ENCODE measurements at regions of chr20 and their contacts with region 1.

Region 1: DNA sequence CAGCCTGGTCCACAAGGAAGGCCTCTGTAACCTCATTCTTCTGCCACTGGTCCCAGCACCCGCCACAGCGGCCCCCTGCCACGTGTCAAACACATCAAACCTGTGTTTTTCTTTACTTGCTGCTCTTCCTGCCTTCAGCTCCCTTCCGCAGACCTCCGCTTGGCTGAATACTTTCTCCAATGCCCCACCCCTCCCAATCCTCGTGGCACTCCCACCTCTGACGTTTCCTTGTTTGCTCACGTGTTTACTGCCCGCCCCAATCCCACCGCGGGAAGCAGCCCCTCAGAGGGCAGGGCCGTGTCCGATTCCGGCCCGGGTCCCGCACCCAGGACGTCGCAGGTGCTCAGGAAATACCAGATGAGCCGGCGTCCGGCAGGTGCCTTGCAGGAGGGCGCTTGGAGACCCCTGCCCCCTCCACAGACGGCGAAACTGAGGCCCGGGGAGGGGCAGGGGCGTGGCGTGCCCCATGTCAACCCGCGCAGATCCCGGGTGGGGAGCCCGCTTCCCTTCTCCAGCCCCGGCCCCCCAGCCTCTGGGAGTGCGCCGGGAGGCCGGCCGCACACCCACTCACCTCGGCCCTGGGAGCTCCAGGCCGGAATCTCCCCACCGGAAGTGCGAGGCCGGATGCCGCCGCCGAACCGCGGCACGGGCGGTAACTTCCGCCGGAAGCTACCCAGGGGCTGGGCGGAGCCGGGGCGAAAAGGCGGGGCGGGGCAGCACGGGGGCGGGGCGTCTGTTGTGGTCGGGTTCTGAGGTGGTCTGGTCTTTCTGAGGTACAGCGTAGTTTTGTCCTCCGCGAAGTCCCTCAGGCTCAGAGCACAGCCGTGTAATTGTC is 42.4 kb downstream of the ELMO2 start:
- DNase-seq: peak; percentile 86
- ATAC-seq: peak; percentile 81
- H3K4me3 Mint-ChIP-seq: peak overlapping the region; percentile 95
- H3K27ac Mint-ChIP-seq: peak overlapping the region; percentile 89
- H3K4me1 Mint-ChIP-seq: peaks cover 80% of the 10 kb centered on the region
- H3K27me3 Mint-ChIP-seq: no peaks in the 10 kb centered on the region
- CTCF ChIP-seq: no peak

Region 2: DNA sequence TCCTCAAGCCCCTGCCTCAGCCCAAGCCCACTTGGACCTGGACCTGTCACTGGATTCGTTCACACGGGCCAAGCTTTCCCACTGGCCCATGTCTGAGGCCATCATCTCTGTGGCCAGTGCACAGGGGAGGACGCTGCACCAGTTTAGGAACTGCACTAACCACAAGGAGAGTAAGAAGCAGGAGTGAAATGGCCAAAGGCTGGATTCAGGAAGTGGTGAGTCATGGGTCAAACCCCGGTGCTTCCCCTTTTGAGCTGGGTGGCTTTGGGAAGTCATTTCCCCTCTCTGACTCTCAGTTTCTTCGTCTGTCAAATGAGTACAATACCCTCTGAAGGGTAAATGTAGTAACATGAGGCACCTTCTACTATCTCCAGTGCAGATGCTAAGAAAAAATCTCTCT is 158.0 kb before region 1 on chr20:
- CTCF ChIA-PET with region 1: no interaction called
- POLR2A ChIA-PET with region 1: no interaction called
- intact Hi-C with region 1: no loop called
- DNase-seq: no peak
- ATAC-seq: no peak
- H3K4me3 Mint-ChIP-seq: no peak overlapping the region
- H3K27ac Mint-ChIP-seq: no peak overlapping the region
- H3K4me1 Mint-ChIP-seq: peaks cover 23% of the 10 kb centered on the region
- H3K27me3 Mint-ChIP-seq: peaks cover 33% of the 10 kb centered on the region
- CTCF ChIP-seq: no peak

Region 3: GRCh38 chr20:46243707-46244628 is 120.0 kb before region 1 on chr20:
- CTCF ChIA-PET with region 1: no interaction called
- POLR2A ChIA-PET with region 1: no interaction called
- intact Hi-C with region 1: no loop called
- DNase-seq: no peak
- ATAC-seq: no peak
- H3K4me3 Mint-ChIP-seq: no peak overlapping the region
- H3K27ac Mint-ChIP-seq: no peak overlapping the region
- H3K4me1 Mint-ChIP-seq: peaks cover 3% of the 10 kb centered on the region
- H3K27me3 Mint-ChIP-seq: peaks cover 38% of the 10 kb centered on the region
- CTCF ChIP-seq: no peak

Region 4: DNA sequence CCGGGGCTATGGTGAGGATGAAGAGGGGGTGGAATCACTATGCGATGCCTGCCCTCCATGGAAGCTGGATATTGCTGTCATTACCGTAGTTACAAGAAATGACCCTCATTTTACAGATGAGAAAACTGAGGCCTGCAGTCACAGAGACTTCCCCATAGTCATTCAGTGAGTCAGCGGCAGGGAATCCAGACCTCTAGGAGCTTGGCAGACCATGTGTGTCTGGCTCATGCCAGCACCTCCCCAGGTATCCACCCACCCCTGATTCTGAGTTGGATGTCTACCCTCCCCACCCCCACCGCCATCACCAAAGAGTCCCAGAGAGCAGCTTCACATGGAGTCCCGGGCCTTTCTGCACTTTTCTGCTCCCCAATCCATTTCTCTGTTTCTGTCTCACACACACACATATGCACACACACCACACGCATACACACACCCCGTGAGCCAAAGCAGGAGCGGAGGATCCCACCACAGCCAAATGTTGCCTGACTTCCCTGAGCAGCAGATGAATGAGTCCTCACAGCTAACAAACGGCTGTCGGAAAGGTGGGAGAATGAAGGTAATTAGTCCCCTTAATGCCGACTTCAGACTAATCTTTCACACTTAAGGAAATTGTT is 80.5 kb before region 1 on chr20:
- CTCF ChIA-PET with region 1: no interaction called
- POLR2A ChIA-PET with region 1: no interaction called
- intact Hi-C with region 1: no loop called
- DNase-seq: no peak
- ATAC-seq: no peak
- H3K4me3 Mint-ChIP-seq: no peak overlapping the region
- H3K27ac Mint-ChIP-seq: no peak overlapping the region
- H3K4me1 Mint-ChIP-seq: no peaks in the 10 kb centered on the region
- H3K27me3 Mint-ChIP-seq: peaks cover 28% of the 10 kb centered on the region
- CTCF ChIP-seq: no peak

Region 5: DNA sequence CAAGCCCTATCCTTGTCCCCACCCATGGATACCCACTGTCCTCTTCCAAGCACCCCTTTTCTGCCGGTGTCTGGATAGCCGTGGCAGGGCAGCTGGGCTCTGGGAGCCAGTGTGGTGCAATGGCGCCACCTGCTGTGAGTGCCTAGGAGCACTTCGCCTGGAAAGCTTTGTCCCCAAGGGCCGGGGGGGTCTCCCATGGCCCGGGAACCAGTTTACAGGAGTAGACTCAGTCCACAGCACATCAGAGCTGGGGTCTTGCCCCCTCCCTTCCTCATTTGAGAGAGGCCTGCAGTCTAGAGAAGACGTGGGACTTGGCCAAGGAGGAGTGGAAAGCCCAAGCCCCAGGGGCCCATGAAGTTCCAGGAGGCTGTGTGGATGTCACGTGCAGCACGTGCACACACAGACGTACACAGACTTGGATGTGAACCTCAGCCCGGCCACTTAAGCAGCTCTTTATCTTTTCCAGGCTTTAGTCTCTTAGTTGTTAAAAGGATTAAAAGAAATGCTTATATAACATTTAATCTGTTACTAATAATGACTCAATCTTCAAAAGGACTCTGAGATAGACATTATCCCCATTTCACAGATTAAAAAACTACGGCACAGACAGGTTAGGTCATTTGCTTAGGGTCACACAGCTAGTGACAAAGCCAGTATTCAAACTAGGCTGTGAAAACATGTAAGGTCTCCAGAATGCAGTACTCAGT is 14.8 kb before region 1 on chr20:
- CTCF ChIA-PET with region 1: interaction called, 16 read pairs
- POLR2A ChIA-PET with region 1: interaction called, 5 read pairs
- intact Hi-C with region 1: no loop called
- DNase-seq: peak; percentile 64
- ATAC-seq: peak; percentile 68
- H3K4me3 Mint-ChIP-seq: no peak overlapping the region
- H3K27ac Mint-ChIP-seq: no peak overlapping the region
- H3K4me1 Mint-ChIP-seq: peaks cover 17% of the 10 kb centered on the region
- H3K27me3 Mint-ChIP-seq: no peaks in the 10 kb centered on the region
- CTCF ChIP-seq: peak; percentile 78

Region 6: GRCh38 chr20:46400828-46401477 is 36.9 kb after region 1 on chr20:
- CTCF ChIA-PET with region 1: interaction called, 3 read pairs
- POLR2A ChIA-PET with region 1: interaction called, 32 read pairs
- intact Hi-C with region 1: loop called (anchors 5 kb)
- DNase-seq: peak; percentile 49
- ATAC-seq: peak; percentile 85
- H3K4me3 Mint-ChIP-seq: peak overlapping the region; percentile 48
- H3K27ac Mint-ChIP-seq: peak overlapping the region; percentile 88
- H3K4me1 Mint-ChIP-seq: peaks cover 62% of the 10 kb centered on the region
- H3K27me3 Mint-ChIP-seq: no peaks in the 10 kb centered on the region
- CTCF ChIP-seq: no peak

Region 7: DNA sequence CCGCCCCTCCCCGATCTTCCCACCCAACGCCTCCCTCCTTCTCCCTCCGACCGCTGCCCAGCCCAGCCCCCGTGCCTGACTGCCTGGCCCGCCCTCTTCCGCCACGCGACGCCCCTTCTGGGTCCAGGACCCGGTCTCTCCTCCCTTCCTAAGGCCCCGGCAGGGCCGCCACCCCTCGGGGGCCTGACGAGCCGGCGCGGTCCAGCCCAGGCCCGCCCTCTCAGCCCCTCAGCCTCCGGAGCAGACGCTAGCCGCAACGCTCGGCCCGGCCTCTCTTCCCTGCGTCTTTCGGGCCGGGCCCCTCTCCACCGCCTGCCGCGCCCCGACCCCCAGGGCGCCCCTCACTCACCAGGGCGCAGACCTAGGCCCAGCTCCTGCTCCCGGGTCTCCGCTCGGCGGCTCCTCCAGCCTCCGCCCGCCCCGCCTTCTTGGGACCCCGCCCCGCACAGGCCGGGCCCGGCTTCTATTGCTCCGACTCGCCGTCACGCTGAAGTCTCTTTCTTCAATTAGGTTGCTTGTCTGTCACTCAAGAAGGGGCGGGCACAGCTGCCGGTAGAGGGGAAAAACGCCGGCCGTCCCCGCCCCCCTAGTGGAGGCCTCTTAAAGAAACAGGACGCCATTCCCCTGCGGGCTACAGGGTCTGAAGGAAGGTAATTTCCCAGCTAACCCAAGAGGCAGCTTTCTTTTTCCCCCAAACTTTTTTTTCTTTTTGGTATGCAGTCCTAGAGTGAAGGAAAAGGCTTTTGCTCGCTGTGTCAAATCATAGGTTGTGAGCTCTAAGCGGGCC is 42.4 kb after region 1 on chr20 and contains the start of gene ELMO2:
- CTCF ChIA-PET with region 1: interaction called, 7 read pairs
- POLR2A ChIA-PET with region 1: interaction called, 32 read pairs
- intact Hi-C with region 1: loop called (anchors 5 kb)
- DNase-seq: peak; percentile 99
- ATAC-seq: peak; percentile 86
- H3K4me3 Mint-ChIP-seq: peak within 1 kb of the TSS; percentile 88
- H3K27ac Mint-ChIP-seq: peak within 1 kb of the TSS; percentile 85
- H3K4me1 Mint-ChIP-seq: peaks cover 59% of the 10 kb centered on the region
- H3K27me3 Mint-ChIP-seq: no peaks in the 10 kb centered on the region
- CTCF ChIP-seq: no peak
- total RNA-seq, gene ELMO2: 36.2 to 38.1 TPM

Region 8: DNA sequence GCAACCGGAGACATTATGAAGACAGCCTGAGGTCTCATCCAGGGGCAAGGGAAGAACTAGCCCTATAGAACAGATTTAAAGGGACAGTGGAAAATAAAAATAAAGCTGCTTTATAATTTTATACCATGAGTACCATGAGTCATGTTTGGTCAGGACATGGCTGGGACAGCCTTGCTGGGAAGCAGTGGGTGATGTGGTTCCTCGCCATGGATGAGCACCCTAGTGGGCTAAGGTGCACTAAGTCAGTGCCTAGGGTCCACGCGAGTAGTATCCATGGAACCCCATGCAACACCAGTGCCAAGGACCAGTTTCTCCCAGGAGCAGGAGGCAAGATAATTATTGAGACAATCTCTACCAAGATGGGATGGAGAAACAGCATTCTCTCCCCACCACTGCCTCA is 75.8 kb after region 1 on chr20:
- CTCF ChIA-PET with region 1: no interaction called
- POLR2A ChIA-PET with region 1: no interaction called
- intact Hi-C with region 1: no loop called
- DNase-seq: no peak
- ATAC-seq: no peak
- H3K4me3 Mint-ChIP-seq: no peak overlapping the region
- H3K27ac Mint-ChIP-seq: no peak overlapping the region
- H3K4me1 Mint-ChIP-seq: no peaks in the 10 kb centered on the region
- H3K27me3 Mint-ChIP-seq: peaks cover 21% of the 10 kb centered on the region
- CTCF ChIP-seq: no peak